ENCODE measurements at regions of chr4 and their contacts with region 1.

Region 1: DNA sequence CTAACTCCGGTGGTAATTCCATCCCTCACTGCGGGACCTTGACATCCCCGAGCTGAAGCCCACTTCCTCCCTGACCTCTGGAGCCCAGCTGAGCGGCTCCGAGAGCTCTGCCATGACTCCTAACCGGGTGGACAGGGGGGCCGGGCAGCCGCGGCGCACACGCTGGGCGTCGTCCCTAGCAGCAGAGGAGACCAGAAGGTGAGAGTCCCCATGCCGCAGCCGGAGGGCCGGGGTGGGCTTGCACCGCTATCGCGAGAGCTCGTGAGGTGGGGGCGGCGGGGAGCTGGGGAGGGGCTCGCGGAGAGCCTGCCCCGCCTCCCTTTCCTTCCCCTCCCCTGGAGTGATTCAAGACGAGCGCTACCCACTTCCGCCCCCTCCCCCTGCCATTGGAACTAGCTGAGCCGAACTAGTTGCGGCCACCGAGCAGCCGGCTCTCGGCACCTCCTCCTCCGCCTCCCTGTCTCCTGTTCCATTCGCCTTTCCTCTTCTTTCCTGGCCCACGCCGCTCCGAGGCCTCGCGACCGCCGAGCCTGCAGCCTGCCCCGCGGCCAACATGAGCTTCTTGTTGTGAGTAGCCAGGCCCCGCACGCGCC is at the start of gene MOB1B:
- DNase-seq: peak; percentile 87
- ATAC-seq: peak; percentile 89
- H3K4me3 ChIP-seq: peak within 1 kb of the TSS; percentile 87
- H3K27ac ChIP-seq: no peak within 1 kb of the TSS
- H3K4me1 ChIP-seq: peaks cover 11% of the 10 kb centered on the region
- H3K27me3 ChIP-seq: no peaks in the 10 kb centered on the region
- CTCF ChIP-seq: no peak
- total RNA-seq, gene MOB1B: 11.4 and 12.6 TPM in 2 replicates

Region 2: DNA sequence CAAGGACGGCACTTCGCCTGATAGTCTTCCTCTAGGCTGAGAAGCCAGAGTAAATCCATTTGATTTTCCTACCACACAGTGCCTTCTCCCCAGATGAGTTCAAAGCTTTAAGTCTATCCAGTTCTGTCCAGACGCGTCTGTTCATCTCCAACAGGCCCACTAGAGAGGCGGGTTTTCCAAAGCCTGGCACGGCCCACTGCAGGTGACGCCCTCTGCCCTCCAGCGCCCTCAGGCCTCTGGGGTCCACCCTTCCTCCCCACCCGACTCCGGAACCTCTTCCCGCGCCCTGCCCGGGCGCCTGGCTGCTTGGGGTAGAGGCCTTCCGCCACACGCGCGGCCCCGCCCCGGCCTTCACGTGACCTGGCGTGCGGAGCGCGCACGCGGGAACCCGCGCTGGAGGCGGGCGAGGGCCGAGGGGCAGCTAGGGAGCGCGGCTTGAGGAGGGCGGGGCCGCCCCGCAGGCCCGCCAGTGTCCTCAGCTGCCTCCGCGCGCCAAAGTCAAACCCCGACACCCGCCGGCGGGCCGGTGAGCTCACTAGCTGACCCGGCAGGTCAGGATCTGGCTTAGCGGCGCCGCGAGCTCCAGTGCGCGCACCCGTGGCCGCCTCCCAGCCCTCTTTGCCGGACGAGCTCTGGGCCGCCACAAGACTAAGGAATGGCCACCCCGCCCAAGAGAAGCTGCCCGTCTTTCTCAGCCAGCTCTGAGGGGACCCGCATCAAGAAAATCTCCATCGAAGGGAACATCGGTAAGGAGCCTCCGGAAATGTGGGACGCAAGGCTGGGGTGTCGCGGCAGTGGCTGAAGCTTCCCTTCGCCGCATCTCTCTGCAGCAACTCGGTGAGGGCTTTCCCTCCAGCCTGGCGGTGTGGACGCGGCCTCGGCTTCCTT is 91.3 kb after region 1 on chr4 and contains the start of gene DCK:
- CTCF ChIA-PET with region 1: interaction called, 5 read pairs
- POLR2A ChIA-PET with region 1: no interaction called
- intact Hi-C with region 1: loop called (anchors 2 kb)
- DNase-seq: peak; percentile 95
- ATAC-seq: peak; percentile 87
- H3K4me3 ChIP-seq: peak within 1 kb of the TSS; percentile 75
- H3K27ac ChIP-seq: peak within 1 kb of the TSS; percentile 29
- H3K4me1 ChIP-seq: peaks cover 31% of the 10 kb centered on the region
- H3K27me3 ChIP-seq: no peaks in the 10 kb centered on the region
- CTCF ChIP-seq: no peak
- total RNA-seq, gene DCK: 19.5 and 21.0 TPM in 2 replicates

Measured in PC-3 (cell line).